ENCODE measurements at regions of chr15 and their contacts with region 1.

Region 1: GRCh38 chr15:27656296-27656987 is 442.7 kb downstream of the OCA2 start:
- DNase-seq: no peak
- ATAC-seq: no peak
- H3K4me3 ChIP-seq: no peak overlapping the region
- H3K27ac ChIP-seq: no peak overlapping the region
- H3K4me1 ChIP-seq: no peaks in the 10 kb centered on the region
- H3K27me3 ChIP-seq: peaks cover 0 to 4% (median 0%) of the 10 kb centered on the region in 7 donors
- CTCF ChIP-seq: no peak

Region 2: DNA sequence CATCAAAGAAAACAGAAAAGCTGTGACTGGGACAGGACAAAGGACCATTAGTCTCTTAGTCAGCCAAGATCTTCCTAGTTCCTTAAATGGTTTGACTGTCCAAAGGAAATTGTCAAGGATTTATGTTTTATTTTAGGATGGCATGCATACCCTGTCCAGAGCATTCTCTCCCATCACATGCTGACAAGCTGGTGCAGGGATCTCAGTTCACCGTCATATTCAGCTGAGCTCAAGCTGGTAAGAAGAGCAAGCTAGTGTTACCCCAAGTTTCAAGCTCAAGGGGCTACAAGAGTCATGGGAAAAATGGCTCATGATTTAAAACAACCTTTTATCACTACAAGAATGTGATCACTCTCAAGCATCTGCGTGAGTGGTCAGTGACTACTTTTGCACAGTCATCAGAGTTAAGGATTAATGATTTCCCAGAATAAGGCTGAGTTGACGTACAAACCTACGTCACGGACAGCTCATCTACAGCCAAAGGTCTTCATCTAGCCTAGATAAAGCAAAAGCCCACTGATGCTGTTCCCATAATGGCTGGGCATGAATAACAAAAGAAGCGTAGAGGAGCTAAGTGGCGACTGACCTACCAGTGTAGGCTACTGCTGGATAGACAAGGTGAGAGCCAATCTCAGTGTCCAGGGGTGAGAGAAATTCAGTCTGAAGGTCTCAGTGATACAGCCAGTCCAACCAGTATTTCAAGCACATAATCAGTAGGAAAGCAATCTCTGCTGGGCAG is 1041.1 kb before region 1 on chr15:
- intact Hi-C with region 1: no loop called
- DNase-seq: no peak
- ATAC-seq: peak in 2 of 8 donors; percentile 55 to 68
- H3K4me3 ChIP-seq: no peak overlapping the region
- H3K27ac ChIP-seq: no peak overlapping the region
- H3K4me1 ChIP-seq: no peaks in the 10 kb centered on the region
- H3K27me3 ChIP-seq: no peaks in the 10 kb centered on the region
- CTCF ChIP-seq: no peak

Region 3: GRCh38 chr15:27686369-27686768 is 29.9 kb after region 1 on chr15:
- intact Hi-C with region 1: no loop called
- DNase-seq: no peak
- ATAC-seq: no peak
- H3K4me3 ChIP-seq: no peak overlapping the region
- H3K27ac ChIP-seq: no peak overlapping the region
- H3K4me1 ChIP-seq: no peaks in the 10 kb centered on the region
- H3K27me3 ChIP-seq: no peaks in the 10 kb centered on the region
- CTCF ChIP-seq: no peak

Region 4: GRCh38 chr15:27714675-27715074 is 58.2 kb after region 1 on chr15:
- intact Hi-C with region 1: loop called in 1 of 10 experiments (anchors 10 kb)
- DNase-seq: no peak
- ATAC-seq: no peak
- H3K4me3 ChIP-seq: no peak overlapping the region
- H3K27ac ChIP-seq: no peak overlapping the region
- H3K4me1 ChIP-seq: no peaks in the 10 kb centered on the region
- H3K27me3 ChIP-seq: peaks cover 0 to 3% (median 0%) of the 10 kb centered on the region in 7 donors
- CTCF ChIP-seq: no peak

Region 5: DNA sequence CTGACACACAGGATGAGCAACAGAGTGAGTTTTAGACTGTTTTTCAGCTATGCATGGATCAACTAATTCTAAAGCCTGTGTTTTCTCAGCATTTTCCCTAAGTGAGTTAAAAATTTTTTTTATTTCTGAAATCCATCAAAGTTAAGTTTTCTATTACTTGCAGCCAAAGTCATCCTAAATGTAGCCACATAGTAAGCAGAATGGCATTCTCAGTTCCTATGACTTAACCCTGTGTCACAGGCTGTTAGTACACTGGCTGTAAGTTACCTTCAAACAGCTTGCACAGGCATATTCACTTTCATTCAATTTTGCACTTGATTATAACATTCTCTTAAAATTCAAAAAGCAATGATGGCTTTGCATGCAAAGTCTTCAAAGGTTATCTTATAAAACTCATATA is 74.4 kb after region 1 on chr15:
- intact Hi-C with region 1: no loop called
- DNase-seq: no peak
- ATAC-seq: no peak
- H3K4me3 ChIP-seq: no peak overlapping the region
- H3K27ac ChIP-seq: no peak overlapping the region
- H3K4me1 ChIP-seq: no peaks in the 10 kb centered on the region
- H3K27me3 ChIP-seq: no peaks in the 10 kb centered on the region
- CTCF ChIP-seq: no peak

Measured in heart right ventricle (tissue), 16 donors.